Psoas muscle (tissue), 8 donors: ENCODE measurements at regions of chr2 and their contacts with region 1.

Region 1: DNA sequence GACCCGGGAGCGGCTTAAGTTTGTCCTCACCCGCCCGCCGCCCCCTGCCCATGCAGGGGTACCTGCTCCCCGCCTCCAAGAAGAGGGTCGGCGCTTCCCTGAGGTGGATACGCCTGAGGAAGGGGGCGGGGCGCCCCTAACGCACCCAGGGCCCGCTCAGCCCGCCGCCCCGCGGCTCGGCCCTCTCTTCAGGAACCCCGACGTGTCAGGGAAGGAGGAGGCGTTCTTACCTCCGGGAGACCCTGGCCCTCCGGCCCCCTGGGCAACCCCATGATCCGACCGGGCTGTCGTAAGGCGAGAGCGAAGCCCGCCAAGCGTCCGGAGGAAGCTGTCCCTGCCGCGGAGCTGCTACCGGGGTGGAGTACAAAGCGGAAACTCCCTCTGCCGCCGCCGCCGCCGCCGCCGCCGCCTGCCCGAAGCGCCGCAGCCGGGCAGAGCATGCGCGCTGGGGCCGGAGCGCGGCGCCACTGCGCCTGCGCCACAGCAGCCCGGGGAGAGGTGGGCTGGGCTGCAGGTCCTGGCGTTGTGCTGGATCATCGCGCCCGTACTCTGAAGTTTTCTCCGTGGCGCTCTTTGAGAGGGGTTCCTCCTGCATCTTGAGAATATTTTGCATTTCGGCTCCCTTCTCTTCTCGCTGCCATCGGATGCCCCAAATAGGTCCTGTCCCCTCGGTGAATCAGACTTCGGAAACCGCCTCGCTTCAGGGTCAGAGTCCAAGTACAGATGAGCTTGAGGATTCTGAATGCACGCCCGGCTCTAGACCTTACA is at the start of gene CCDC93:
- DNase-seq: peak; percentile 85 to 92
- ATAC-seq: peak; percentile 95 to 98 (median 97)
- H3K4me3 ChIP-seq: peak within 1 kb of the TSS; percentile 100
- H3K27ac ChIP-seq: peak within 1 kb of the TSS; percentile 89
- H3K4me1 ChIP-seq: peaks cover 17% of the 10 kb centered on the region
- H3K27me3 ChIP-seq: no peaks in the 10 kb centered on the region
- CTCF ChIP-seq: no peak
- total RNA-seq, gene CCDC93: 9.9 to 15.5 (median 14.5) TPM

Region 2: GRCh38 chr2:118088051-118089024 is 74.4 kb after region 1 on chr2 and contains the start of gene INSIG2:
- intact Hi-C with region 1: loop called in 1 of 2 experiments (anchors 5 kb)
- DNase-seq: peak; percentile 94 to 96
- ATAC-seq: peak; percentile 99 to 100 (median 100)
- H3K4me3 ChIP-seq: peak within 1 kb of the TSS; percentile 67
- H3K27ac ChIP-seq: peak within 1 kb of the TSS; percentile 62
- H3K4me1 ChIP-seq: peaks cover 8% of the 10 kb centered on the region
- H3K27me3 ChIP-seq: no peaks in the 10 kb centered on the region
- CTCF ChIP-seq: no peak
- total RNA-seq, gene INSIG2: 4.8 to 7.8 (median 7.6) TPM